ENCODE measurements at regions of chr1 and their contacts with region 1.

Region 1: DNA sequence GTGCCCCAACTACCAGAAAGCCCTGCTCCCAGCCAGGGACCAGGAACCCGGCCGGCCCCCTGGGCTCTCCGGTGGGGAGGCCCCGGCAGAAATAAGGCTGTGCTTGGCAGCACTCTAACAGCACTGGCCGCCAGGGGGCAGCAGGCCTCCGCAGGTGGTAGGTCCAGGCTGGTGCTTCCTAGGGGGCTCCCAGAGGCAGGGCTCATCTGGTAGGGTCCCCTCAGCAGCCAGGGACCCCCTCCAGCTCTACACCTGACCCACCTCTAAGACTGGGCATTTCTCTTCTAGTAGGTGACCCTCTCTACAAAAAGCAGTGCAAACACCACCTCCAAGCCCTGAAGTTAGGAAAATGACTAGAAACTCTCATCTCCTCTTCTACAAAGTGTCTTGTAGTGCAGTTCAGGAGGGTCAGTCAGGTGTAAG is 85.6 kb downstream of the STUM start:
- H3K4me3 Mint-ChIP-seq: no peak overlapping the region
- H3K27ac Mint-ChIP-seq: peak overlapping the region; percentile 40
- H3K4me1 Mint-ChIP-seq: peaks cover 65% of the 10 kb centered on the region
- H3K27me3 Mint-ChIP-seq: no peaks in the 10 kb centered on the region

Region 2: DNA sequence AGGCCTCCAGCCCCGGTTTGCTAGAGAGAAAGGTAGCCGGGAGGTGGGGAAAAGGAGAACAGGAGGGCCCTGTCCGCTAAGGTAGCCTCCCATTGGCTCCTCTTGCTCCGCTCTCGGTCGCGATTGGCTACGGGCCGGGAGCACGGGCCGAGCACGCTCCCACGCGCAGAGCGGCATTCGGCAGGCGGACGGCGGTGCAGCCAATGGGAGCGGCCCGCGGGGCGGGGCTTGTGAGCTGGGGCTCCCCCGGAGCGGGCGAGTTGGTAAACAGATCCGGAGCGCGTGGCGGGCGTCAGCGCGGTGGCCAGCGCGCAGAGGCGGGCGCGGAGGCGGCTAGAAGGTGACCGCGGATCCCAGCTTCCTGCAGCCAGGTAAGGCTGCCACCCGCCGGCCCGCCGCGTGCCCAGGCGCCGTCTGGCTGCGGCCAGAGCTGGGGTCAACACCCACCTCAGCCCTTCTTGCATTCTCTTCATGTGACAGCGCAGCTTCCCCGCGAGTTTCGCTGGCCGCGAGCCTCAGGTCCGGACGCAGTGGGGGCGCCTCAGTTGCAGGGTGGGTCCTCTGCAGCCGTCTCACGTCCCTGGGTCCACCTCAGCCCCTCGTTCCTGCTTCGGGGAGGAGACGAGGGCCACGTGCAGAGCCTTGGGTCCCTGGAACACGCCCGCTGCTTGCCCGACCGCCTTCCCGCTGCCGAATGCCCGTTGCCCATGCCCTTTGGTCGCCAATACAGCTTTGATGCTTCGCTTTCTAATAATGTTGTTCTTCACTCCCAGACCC is 306.0 kb after region 1 on chr1 and contains the start of gene COQ8A:
- intact Hi-C with region 1: loop called (anchors 10 kb)
- H3K4me3 Mint-ChIP-seq: peak within 1 kb of the TSS; percentile 82
- H3K27ac Mint-ChIP-seq: peak within 1 kb of the TSS; percentile 98
- H3K4me1 Mint-ChIP-seq: peaks cover 68% of the 10 kb centered on the region
- H3K27me3 Mint-ChIP-seq: no peaks in the 10 kb centered on the region

Measured in dendritic cell treated with granulocyte-macrophage colony-stimulating factor and Interleukin-4, amounts not matched to agents 40 ng/mL and 50 ng/mL, for 4 days (primary cell).